ENCODE measurements at regions of chr15 and their contacts with region 1.

Region 1: GRCh38 chr15:60729850-60730458 is 251.0 kb upstream of the ICE2 start:
- DNase-seq: peak; percentile 24
- H3K4me3 Mint-ChIP-seq: peak overlapping the region; percentile 72
- H3K27ac Mint-ChIP-seq: peak overlapping the region; percentile 85
- H3K4me1 Mint-ChIP-seq: peaks cover 72% of the 10 kb centered on the region
- H3K27me3 Mint-ChIP-seq: no peaks in the 10 kb centered on the region

Region 2: DNA sequence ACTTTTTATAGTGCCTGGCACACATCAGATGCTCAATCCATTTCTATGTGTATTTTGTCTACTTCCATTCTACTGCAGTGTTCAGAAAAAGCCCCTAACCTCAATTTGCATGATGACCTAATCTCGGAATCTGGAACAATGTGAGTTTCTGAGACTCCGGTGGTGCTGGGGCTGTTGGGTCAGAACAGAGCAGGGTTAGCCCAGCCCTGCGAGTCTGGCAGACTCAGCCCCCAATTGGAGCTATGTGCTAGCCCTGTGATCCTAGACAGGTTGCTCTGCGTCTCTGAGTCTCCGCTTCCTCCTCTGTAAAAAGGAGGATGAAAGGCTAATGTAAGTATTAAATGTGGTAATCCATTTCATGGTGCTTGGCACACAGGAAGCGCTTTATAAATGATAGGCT is 156.0 kb before region 1 on chr15:
- intact Hi-C with region 1: no loop called
- DNase-seq: peak; percentile 44
- H3K4me3 Mint-ChIP-seq: peak overlapping the region; percentile 79
- H3K27ac Mint-ChIP-seq: peak overlapping the region; percentile 99
- H3K4me1 Mint-ChIP-seq: peaks cover 79% of the 10 kb centered on the region
- H3K27me3 Mint-ChIP-seq: no peaks in the 10 kb centered on the region

Region 3: GRCh38 chr15:60660290-60661051 is 69.5 kb before region 1 on chr15:
- intact Hi-C with region 1: no loop called
- DNase-seq: no peak
- H3K4me3 Mint-ChIP-seq: no peak overlapping the region
- H3K27ac Mint-ChIP-seq: no peak overlapping the region
- H3K4me1 Mint-ChIP-seq: peaks cover 55% of the 10 kb centered on the region
- H3K27me3 Mint-ChIP-seq: peaks cover 3% of the 10 kb centered on the region

Region 4: GRCh38 chr15:60706145-60706544 is 23.8 kb before region 1 on chr15:
- intact Hi-C with region 1: no loop called
- DNase-seq: no peak
- H3K4me3 Mint-ChIP-seq: no peak overlapping the region
- H3K27ac Mint-ChIP-seq: no peak overlapping the region
- H3K4me1 Mint-ChIP-seq: peaks cover 33% of the 10 kb centered on the region
- H3K27me3 Mint-ChIP-seq: no peaks in the 10 kb centered on the region

Region 5: DNA sequence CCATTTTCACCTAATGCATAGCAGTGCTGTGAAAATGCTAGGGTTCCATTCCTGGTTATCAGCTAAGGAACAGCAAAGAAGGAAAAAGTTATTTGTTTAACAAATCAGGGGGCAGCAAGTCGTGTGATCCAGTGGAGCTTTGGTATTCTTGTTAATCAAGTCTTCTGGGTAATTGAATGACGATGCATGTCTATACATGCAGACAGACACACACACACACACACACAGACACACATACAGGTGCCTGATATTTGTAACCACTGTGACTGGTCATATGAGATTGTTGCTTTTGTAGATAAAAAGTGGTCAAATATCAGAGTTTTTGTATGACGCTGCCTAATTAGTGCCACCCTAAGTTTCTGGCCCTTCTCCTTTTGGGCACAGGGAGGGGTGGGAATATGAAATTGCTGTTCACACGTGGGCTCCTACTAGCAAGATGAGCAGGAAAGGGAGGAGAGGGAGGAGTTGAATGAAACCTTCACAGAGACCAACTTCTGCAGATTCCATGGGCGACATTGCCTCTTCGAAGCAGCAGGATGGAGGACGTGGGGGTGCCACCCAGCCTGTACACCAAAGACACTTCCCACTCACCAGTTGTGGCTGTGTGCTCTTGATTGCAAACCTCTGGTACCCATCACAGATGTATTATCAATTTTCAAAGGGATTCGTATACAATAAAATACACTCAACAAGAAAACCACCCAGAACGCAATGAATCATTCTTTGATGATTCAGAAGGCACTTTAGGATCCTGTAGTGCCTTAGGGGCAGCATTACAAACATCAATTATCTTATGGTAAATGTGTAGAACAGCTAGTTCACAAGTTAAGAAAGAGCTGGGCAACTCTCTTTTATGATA is 30.9 kb after region 1 on chr15:
- intact Hi-C with region 1: loop called (anchors 1 kb)
- DNase-seq: no peak
- H3K4me3 Mint-ChIP-seq: no peak overlapping the region
- H3K27ac Mint-ChIP-seq: peak overlapping the region; percentile 41
- H3K4me1 Mint-ChIP-seq: peaks cover 26% of the 10 kb centered on the region
- H3K27me3 Mint-ChIP-seq: peaks cover 2% of the 10 kb centered on the region